GM10248 (cell line): ENCODE measurements at regions of chr3 and their contacts with region 1.

Region 1: GRCh38 chr3:113546414-113546893 is 14.1 kb downstream of the SIDT1 start:
- DNase-seq: peak; percentile 34
- CTCF ChIP-seq: no peak

Region 2: GRCh38 chr3:113535898-113536297 is 10.6 kb before region 1 on chr3:
- CTCF ChIA-PET with region 1: interaction called, 11 read pairs
- POLR2A ChIA-PET with region 1: no interaction called
- DNase-seq: no peak
- CTCF ChIP-seq: no peak

Region 3: GRCh38 chr3:114444216-114444615 is 897.8 kb after region 1 on chr3:
- CTCF ChIA-PET with region 1: no interaction called
- POLR2A ChIA-PET with region 1: interaction called, 10 read pairs
- DNase-seq: no peak
- CTCF ChIP-seq: no peak